ENCODE measurements at regions of chr7 and their contacts with region 1.

Region 1: DNA sequence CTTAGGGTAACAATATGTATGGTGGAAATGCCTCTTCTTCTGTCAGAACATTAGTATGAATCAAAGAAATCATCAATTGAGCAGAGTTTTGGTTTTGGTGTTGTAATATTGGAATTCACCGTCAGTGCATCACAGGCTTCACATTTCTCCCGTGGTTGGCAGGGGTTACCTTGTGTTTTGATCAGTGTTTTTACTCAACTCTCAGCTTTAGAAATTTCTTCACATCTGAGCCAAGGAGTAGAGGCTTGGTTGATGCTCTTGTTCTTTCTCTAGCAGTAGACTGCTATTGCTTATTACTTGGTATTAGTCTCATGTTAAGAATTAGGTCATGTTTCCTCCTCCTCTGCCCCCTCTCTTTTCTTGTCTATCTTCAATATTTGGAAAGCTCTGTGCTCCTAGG is 188.8 kb upstream of the SMIM30 start:
- DNase-seq: no peak
- H3K4me3 ChIP-seq: no peak overlapping the region
- H3K27ac ChIP-seq: no peak overlapping the region
- H3K4me1 ChIP-seq: no peaks in the 10 kb centered on the region
- H3K27me3 ChIP-seq: no peaks in the 10 kb centered on the region
- CTCF ChIP-seq: no peak
- POLR2A ChIP-seq: no peak

Region 2: DNA sequence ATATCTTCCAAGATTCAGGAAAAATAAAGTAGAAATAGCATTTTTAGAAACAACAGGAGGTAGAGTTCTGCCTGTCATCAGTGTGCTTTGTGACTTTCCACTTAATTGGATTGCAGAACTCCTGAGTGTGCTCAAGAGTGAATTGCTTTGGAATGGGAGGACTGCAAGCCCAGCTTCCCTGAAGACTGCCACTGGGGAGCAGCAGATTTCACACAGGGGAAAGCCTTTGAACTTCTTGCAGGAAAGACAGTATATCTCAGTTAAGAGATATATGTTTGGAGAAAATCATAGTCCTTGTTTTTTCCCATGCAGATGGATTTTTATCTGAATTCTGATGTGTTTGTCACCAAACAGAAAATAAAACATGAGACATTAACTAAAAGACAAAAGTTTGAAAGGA is 641.4 kb before region 1 on chr7:
- intact Hi-C with region 1: no loop called
- DNase-seq: no peak
- H3K4me3 ChIP-seq: no peak overlapping the region
- H3K27ac ChIP-seq: no peak overlapping the region
- H3K4me1 ChIP-seq: no peaks in the 10 kb centered on the region
- H3K27me3 ChIP-seq: no peaks in the 10 kb centered on the region
- CTCF ChIP-seq: no peak
- POLR2A ChIP-seq: no peak

Region 3: DNA sequence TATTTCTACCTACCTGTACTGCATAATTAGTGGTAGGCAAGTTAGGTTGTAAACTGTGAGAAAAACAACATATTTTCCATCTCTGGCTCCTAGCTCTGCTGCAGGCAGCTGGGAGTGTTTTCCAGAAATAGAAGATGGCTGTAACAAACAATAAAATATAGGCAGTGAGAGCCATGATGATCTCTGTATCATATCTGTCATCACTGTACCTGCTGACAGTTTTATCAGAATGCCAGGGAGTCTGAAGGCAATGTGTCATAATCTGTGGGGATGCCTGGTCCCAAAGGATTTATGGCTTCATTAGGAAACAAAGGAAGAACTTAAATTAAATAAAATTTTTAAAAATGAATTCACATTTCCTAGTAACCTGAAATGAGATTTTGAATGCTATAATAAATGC is 27.9 kb before region 1 on chr7:
- intact Hi-C with region 1: loop called (anchors 1 kb)
- DNase-seq: no peak
- H3K4me3 ChIP-seq: no peak overlapping the region
- H3K27ac ChIP-seq: no peak overlapping the region
- H3K4me1 ChIP-seq: no peaks in the 10 kb centered on the region
- H3K27me3 ChIP-seq: no peaks in the 10 kb centered on the region
- CTCF ChIP-seq: no peak
- POLR2A ChIP-seq: no peak

Measured in vagina (tissue), 2 donors.